Activated T-helper 1 cell treated with anti-CD3 and anti-CD28 coated beads, Interleukin-12 subunit alpha, Interleukin-12 subunit beta, Interleukin-2, Interleukin-4 antibody, amounts not matched to agents 30 ng/mL and 10 ng/mL and 1 ng/mL, durations not matched to agents 14 hours and 24 hours and 36 hours (primary cell): ENCODE measurements at regions of chr7 and their contacts with region 1.

Region 1: DNA sequence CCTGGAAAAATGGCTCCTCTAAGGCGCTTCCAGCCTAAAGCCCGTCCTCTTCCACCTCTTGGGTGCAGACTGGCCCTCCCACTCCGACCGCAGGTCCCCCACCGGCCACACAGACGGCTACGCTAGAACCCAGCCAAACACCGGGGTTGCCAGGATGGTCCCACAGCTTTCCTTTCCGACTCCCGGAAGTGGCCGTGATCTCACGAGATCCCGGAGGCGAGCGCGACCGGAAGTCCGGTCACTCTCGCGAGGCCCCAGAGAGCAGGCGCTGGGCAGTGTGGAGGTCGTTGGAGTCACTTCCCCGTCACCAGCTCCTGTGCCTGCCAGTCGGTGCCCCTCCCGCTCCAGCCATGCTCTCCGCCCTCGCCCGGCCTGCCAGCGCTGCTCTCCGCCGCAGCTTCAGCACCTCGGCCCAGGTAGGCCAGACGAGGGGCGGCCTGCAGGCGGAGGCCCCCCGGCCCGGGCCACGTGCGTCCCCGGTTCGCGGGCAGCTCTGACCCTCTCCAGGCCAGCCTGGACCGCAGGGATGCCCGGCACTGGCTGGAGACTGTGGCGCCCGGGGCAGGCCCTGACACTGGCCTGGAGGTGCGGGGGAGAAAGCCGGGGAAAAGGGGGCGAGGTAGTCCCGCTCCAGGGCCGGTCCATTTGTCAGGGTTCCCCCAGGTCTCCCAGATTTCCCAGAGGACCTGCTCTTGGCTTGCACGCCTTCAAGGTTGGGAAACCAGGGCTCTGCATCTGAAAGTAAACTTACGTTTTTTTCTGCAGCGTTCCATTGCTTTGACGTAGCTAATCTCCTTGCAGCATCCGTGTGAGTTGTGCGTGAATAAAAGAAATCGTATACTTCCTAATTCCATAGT is at the starts of genes MDH2 and STYXL1:
- DNase-seq: peak; percentile 90
- H3K4me3 Mint-ChIP-seq: peak within 1 kb of the TSS; percentile 99
- H3K27ac Mint-ChIP-seq: peak within 1 kb of the TSS; percentile 97
- H3K4me1 Mint-ChIP-seq: peaks cover 53% of the 10 kb centered on the region
- H3K27me3 Mint-ChIP-seq: no peaks in the 10 kb centered on the region
- total RNA-seq, gene MDH2: 249 and 292 TPM in 2 replicates
- total RNA-seq, gene STYXL1: 35.3 and 38.7 TPM in 2 replicates

Region 2: GRCh38 chr7:74587435-74588126 is 1460.5 kb before region 1 on chr7:
- intact Hi-C with region 1: no loop called
- DNase-seq: no peak
- H3K4me3 Mint-ChIP-seq: no peak overlapping the region
- H3K27ac Mint-ChIP-seq: no peak overlapping the region
- H3K4me1 Mint-ChIP-seq: no peaks in the 10 kb centered on the region
- H3K27me3 Mint-ChIP-seq: no peaks in the 10 kb centered on the region

Region 3: DNA sequence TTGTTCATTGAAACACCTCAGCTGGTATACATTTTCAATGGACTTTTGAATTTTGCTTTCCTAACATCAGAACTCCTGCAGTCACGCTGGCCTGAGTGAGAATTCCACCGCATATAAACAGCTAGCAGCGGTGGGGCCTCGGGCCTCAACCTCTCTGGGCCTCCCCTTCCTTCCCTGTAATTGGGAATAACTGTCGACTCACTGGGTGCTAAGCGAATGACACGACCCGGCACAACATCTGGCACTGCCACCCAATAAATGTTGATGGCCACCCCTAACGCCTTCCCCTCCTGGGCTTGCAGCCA is 975.1 kb before region 1 on chr7:
- intact Hi-C with region 1: loop called (anchors 5 kb)
- DNase-seq: no peak
- H3K4me3 Mint-ChIP-seq: peak overlapping the region; percentile 99
- H3K27ac Mint-ChIP-seq: peak overlapping the region; percentile 97
- H3K4me1 Mint-ChIP-seq: peaks cover 5% of the 10 kb centered on the region
- H3K27me3 Mint-ChIP-seq: no peaks in the 10 kb centered on the region

Region 4: DNA sequence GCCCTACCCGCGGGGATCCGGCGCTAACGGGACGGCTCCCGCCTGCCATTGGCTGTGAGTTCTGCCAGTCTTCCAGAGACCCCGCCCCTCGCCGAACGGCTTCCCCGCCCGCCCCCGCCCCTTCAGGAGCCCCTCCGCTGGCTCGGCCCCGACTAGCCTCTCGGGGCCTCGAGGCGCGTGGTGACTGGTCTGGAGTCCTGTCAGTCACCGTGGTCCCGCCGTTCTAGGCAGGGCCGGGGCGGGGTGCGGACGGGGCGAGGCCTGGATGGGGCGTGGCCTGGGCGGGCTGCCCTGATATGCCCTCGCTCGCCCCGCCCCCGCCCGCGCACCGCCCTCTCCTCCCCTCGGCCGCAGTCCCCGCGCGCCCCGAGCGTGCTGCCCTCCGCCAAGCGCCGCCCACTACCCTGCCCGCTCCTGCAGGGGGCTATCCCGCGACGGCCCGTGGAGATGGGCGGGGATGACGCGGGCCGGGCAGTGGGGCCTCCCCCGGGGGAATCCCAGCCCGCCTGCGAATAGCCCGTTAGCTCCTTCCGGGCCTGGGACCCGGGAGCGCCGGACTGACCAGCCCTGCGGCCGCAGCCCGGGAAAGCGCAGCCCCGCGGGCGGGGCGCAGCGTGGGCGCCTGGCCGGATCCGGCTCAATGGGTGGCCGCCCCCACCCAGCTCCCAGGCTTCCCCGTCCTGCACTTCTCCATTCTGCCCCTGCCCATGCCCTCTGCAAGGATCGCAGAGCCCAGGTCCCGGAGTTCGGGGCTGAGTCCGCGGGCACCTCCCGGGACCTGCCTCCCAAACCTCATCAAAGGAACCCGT is 308.8 kb before region 1 on chr7:
- intact Hi-C with region 1: loop called (anchors 1 kb)
- DNase-seq: peak; percentile 98
- H3K4me3 Mint-ChIP-seq: peak overlapping the region; percentile 93
- H3K27ac Mint-ChIP-seq: peak overlapping the region; percentile 96
- H3K4me1 Mint-ChIP-seq: peaks cover 21% of the 10 kb centered on the region
- H3K27me3 Mint-ChIP-seq: peaks cover 17% of the 10 kb centered on the region

Region 5: DNA sequence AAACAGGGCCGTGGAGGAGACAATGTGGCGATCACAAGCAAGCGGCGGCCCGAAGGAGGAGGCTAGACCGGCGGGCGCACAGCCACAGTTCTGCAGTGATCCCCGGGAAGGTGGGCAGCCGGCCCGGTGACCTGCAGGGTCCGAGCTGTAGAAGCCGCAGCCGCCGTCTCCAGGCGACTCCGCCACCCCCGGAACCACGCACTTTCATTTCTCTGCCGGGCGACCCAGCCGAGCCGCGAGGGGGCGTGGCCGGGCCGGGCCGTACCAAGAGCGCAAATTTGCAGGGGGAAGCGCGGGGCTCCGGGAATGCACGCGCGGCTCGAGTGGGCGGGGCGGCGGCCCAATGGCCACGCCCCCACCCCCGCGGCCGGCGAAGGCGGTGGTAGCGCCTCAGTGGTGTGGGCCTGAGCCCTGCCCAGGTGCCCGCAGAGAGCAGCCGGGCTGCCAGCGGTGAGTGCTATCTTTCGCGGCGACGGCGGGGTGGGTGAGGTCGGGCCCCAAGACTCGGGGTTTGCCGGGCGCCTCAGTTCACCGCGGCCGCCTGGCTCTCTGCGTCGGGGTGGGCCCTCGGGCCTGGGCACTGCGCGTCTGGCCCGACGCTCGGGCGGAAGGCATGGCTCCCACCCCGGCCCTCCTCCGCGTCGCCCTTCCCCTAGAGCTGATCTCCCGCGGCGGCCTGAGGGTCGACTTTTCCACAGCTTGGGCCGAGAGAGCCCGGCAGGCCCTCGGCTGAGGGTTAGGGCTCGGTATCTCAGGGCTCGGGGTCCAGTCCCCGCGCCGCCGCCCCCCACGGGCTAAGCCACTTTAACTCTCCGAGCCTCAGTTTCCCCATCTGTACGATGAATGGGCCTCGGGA is 133.1 kb before region 1 on chr7 and contains the start of gene POR:
- intact Hi-C with region 1: loop called (anchors 1 kb)
- DNase-seq: peak; percentile 97
- H3K4me3 Mint-ChIP-seq: peak within 1 kb of the TSS; percentile 91
- H3K27ac Mint-ChIP-seq: peak within 1 kb of the TSS; percentile 86
- H3K4me1 Mint-ChIP-seq: peaks cover 35% of the 10 kb centered on the region
- H3K27me3 Mint-ChIP-seq: peaks cover 3% of the 10 kb centered on the region
- total RNA-seq, gene POR: 84.4 and 91.2 TPM in 2 replicates

Region 6: GRCh38 chr7:76008156-76008687 is 39.8 kb before region 1 on chr7:
- intact Hi-C with region 1: loop called (anchors 1 kb)
- DNase-seq: peak; percentile 24
- H3K4me3 Mint-ChIP-seq: peak overlapping the region; percentile 52
- H3K27ac Mint-ChIP-seq: peak overlapping the region; percentile 94
- H3K4me1 Mint-ChIP-seq: peaks cover 35% of the 10 kb centered on the region
- H3K27me3 Mint-ChIP-seq: peaks cover 5% of the 10 kb centered on the region

Region 7: GRCh38 chr7:76166404-76167255 is 118.6 kb after region 1 on chr7:
- intact Hi-C with region 1: loop called (anchors 1 kb)
- DNase-seq: peak; percentile 93
- H3K4me3 Mint-ChIP-seq: peak overlapping the region; percentile 85
- H3K27ac Mint-ChIP-seq: peak overlapping the region; percentile 85
- H3K4me1 Mint-ChIP-seq: peaks cover 10% of the 10 kb centered on the region
- H3K27me3 Mint-ChIP-seq: peaks cover 2% of the 10 kb centered on the region